Naive thymus-derived CD8-positive, alpha-beta T cell (primary cell): ENCODE measurements at regions of chr18 and their contacts with region 1.

Region 1: GRCh38 chr18:3245853-3246634 is 1.6 kb upstream of the MYL12A start:
- DNase-seq: peak; percentile 61 to 86 (median 76)
- ATAC-seq: peak; percentile 51 to 65
- H3K4me3 Mint-ChIP-seq: peak overlapping the region; percentile 84 to 98 (median 96)
- H3K27ac Mint-ChIP-seq: peak overlapping the region; percentile 92 to 100 (median 98)
- H3K4me1 Mint-ChIP-seq: peaks cover 19 to 41% (median 34%) of the 10 kb centered on the region in 4 donors
- H3K27me3 Mint-ChIP-seq: no peaks in the 10 kb centered on the region

Region 2: GRCh38 chr18:2655178-2655953 is 590.7 kb before region 1 on chr18 and contains the start of gene SMCHD1:
- POLR2A ChIA-PET with region 1: interaction called, 10 read pairs
- DNase-seq: peak; percentile 83 to 95 (median 89)
- ATAC-seq: peak; percentile 69 to 71
- H3K4me3 Mint-ChIP-seq: peak within 1 kb of the TSS; percentile 92 to 99 (median 96)
- H3K27ac Mint-ChIP-seq: peak within 1 kb of the TSS; percentile 90 to 99 (median 98)
- H3K4me1 Mint-ChIP-seq: peaks cover 8 to 62% (median 42%) of the 10 kb centered on the region in 4 donors
- H3K27me3 Mint-ChIP-seq: no peaks in the 10 kb centered on the region
- polyA plus RNA-seq, gene SMCHD1: 27.7 to 33.7 (median 29.4) TPM

Region 3: DNA sequence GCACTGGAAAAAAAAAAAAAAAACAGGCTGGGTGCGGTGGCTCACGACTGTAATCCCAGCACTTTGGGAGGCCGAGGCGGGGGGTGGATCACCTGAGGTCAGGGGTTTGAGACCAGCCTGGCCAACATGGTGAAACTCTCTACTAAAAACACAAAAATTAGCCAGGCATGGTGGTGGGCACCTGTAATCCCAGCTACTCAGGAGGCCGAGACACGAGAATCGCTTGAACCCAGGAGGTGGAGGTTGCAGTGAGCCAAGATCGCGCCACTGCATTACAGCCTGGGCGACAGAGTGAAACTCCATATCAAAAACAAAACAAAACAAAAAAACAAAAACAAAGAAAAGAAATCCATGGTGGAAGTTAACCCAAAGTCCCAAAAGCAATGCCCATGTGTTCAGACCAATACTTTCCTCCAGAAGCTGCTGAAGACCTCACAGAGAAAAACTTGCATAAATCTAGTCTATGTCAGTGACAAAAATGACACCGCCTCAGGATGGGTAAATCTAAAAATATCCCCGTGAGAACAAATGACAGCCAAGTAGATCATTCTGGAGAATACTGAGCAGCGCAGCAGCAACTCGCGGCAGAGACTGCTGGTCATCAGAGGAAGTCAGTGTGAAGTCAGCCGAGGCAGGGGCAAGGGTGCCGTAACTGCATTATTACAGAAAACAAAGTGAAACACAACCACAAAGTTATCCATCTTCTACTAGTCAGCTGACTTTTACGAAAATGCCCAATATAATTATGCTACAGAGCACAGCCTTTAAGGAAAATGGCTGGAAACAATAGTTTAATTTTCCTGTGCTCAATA is 274.1 kb before region 1 on chr18:
- POLR2A ChIA-PET with region 1: interaction called, 15 read pairs
- DNase-seq: peak in 9 of 10 donors; percentile 15 to 74 (median 55)
- ATAC-seq: peak; percentile 58 to 74
- H3K4me3 Mint-ChIP-seq: peak overlapping the region; percentile 71 to 92 (median 86)
- H3K27ac Mint-ChIP-seq: peak overlapping the region; percentile 92 to 99 (median 97)
- H3K4me1 Mint-ChIP-seq: peaks cover 54 to 94% (median 94%) of the 10 kb centered on the region in 4 donors
- H3K27me3 Mint-ChIP-seq: no peaks in the 10 kb centered on the region

Region 4: GRCh38 chr18:2994603-2995432 is 251.2 kb before region 1 on chr18:
- POLR2A ChIA-PET with region 1: interaction called, 26 read pairs
- DNase-seq: peak; percentile 42 to 85 (median 72)
- ATAC-seq: peak; percentile 92 to 93
- H3K4me3 Mint-ChIP-seq: peak overlapping the region; percentile 39 to 84 (median 71)
- H3K27ac Mint-ChIP-seq: peak overlapping the region in 9 of 10 donors; percentile 37 to 89 (median 66)
- H3K4me1 Mint-ChIP-seq: peaks cover 23 to 69% (median 60%) of the 10 kb centered on the region in 4 donors
- H3K27me3 Mint-ChIP-seq: no peaks in the 10 kb centered on the region

Region 5: GRCh38 chr18:3151399-3152264 is 94.4 kb before region 1 on chr18:
- POLR2A ChIA-PET with region 1: interaction called, 10 read pairs
- DNase-seq: peak in 3 of 10 donors; percentile 31 to 45 (median 43)
- ATAC-seq: no peak
- H3K4me3 Mint-ChIP-seq: no peak overlapping the region
- H3K27ac Mint-ChIP-seq: peak overlapping the region in 1 of 10 donors; percentile 20
- H3K4me1 Mint-ChIP-seq: peaks cover 0 to 3% (median 2%) of the 10 kb centered on the region in 4 donors
- H3K27me3 Mint-ChIP-seq: no peaks in the 10 kb centered on the region

Region 6: GRCh38 chr18:3447895-3448837 is 202.1 kb after region 1 on chr18:
- POLR2A ChIA-PET with region 1: interaction called, 112 read pairs
- DNase-seq: peak; percentile 66 to 94 (median 85)
- ATAC-seq: peak; percentile 52 to 59
- H3K4me3 Mint-ChIP-seq: peak overlapping the region; percentile 88 to 99 (median 97)
- H3K27ac Mint-ChIP-seq: peak overlapping the region; percentile 98 to 100 (median 100)
- H3K4me1 Mint-ChIP-seq: peaks cover 13 to 38% (median 28%) of the 10 kb centered on the region in 4 donors
- H3K27me3 Mint-ChIP-seq: peaks cover 0 to 3% (median 0%) of the 10 kb centered on the region in 5 donors